ENCODE measurements at regions of chr13 and their contacts with region 1.

Region 1: DNA sequence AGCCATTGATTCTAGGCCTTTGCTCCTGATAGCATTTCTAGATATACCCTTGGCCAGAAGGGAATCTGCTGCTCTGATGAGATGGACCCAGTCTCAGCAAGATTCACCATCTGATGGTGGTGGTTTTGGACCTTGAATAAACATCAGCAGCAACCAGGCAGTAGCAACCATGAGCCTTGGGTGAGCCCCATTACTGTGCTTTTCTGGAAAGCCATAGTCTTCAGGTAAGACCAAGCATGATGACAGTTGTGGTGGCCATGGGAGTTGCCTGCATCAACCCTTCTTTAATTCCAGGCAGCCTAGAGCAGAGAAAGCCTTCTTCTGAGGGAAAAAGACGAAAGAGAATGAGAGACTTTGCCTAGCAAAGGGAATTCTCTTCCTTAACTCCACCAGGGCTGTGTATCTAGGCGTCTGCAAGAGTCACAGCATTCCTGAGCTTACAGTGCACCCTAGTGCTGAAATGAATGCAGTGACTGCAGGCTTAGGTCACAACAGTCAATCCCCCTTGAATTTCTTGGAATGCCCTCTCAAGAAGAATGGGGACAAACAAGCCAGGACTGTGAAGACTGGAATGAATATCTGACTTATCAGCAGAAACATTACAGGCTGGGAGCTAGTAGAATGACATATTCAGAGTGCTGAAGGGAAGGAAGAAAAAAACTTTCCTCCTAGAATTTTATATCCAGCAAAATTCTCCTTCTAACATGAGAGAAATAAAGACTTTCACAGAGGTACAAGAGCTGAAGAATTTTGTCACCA is 942.4 kb upstream of the PCDH20 start:
- DNase-seq: peak; percentile 74
- H3K4me3 Mint-ChIP-seq: no peak overlapping the region
- H3K27ac Mint-ChIP-seq: no peak overlapping the region
- H3K4me1 Mint-ChIP-seq: no peaks in the 10 kb centered on the region
- H3K27me3 Mint-ChIP-seq: peaks cover 39% of the 10 kb centered on the region
- CTCF ChIP-seq: peak; percentile 78

Region 2: DNA sequence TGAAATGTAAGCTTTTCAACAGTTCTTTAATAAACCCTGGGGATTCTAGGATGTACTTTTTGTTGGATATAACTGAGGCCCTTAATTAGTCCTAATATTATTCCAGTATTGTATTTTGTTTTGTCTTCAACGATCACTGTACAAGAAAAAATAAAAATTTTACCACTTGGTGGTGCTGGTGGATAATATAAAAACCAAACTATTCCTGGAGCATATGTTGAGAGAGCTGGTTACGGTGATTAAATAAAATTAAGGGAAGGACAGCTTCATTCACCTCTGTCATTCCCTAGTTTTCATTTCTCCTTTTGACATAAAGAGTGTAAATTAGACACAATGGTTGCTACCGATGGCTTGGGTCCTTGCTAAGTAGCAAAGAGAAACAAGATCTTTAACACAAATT is 343.8 kb before region 1 on chr13:
- CTCF ChIA-PET with region 1: interaction called, 5 read pairs
- POLR2A ChIA-PET with region 1: no interaction called
- intact Hi-C with region 1: loop called (anchors 1 kb)
- DNase-seq: peak; percentile 38
- H3K4me3 Mint-ChIP-seq: no peak overlapping the region
- H3K27ac Mint-ChIP-seq: no peak overlapping the region
- H3K4me1 Mint-ChIP-seq: no peaks in the 10 kb centered on the region
- H3K27me3 Mint-ChIP-seq: no peaks in the 10 kb centered on the region
- CTCF ChIP-seq: peak; percentile 42

Region 3: DNA sequence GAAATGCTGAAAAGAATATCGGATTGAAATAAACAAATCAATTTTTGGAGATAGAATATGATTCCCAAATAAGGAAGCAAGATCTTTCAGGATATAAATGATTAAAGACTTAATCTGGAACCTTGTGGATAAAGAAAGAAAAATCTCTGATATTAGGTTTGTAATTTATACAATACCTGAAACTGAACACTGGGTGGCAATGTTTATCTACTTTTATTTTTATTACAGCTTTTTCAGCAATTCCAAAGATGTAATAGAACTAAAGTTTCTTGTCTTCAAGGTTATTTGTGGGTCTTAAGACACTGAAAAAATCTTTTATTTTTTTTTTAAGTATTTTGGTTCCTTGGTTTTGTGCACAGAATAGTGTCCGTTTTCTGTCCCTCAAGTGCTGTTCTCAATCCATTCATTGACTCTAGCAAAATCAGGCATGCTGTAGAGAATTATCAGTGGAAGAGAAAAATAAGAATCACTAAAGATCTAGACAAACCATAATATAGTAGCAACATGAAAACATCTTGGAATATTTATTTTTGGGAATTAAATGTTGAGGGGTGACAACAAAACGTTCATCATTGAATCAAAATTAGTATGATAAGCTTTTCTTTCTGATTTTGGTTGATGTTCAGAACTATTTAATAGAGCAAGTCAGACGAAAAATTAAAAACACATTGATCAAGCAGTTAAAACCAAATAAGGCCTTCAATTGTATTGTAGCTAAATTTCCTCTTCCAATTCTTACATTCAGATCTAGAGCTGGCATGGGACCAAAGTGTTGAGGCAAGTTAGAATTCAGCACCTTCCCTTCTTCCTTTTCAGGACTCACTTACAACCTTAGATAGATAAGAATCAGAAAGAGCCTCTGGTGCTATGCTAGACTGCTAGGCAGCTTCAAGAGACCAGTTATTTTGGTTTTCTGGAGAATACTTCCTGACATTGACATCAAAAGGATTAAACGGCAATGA is 238.0 kb before region 1 on chr13:
- CTCF ChIA-PET with region 1: interaction called, 21 read pairs
- POLR2A ChIA-PET with region 1: interaction called, 5 read pairs
- intact Hi-C with region 1: loop called (anchors 1 kb)
- DNase-seq: peak; percentile 27
- H3K4me3 Mint-ChIP-seq: no peak overlapping the region
- H3K27ac Mint-ChIP-seq: no peak overlapping the region
- H3K4me1 Mint-ChIP-seq: no peaks in the 10 kb centered on the region
- H3K27me3 Mint-ChIP-seq: peaks cover 32% of the 10 kb centered on the region
- CTCF ChIP-seq: peak; percentile 37

Region 4: DNA sequence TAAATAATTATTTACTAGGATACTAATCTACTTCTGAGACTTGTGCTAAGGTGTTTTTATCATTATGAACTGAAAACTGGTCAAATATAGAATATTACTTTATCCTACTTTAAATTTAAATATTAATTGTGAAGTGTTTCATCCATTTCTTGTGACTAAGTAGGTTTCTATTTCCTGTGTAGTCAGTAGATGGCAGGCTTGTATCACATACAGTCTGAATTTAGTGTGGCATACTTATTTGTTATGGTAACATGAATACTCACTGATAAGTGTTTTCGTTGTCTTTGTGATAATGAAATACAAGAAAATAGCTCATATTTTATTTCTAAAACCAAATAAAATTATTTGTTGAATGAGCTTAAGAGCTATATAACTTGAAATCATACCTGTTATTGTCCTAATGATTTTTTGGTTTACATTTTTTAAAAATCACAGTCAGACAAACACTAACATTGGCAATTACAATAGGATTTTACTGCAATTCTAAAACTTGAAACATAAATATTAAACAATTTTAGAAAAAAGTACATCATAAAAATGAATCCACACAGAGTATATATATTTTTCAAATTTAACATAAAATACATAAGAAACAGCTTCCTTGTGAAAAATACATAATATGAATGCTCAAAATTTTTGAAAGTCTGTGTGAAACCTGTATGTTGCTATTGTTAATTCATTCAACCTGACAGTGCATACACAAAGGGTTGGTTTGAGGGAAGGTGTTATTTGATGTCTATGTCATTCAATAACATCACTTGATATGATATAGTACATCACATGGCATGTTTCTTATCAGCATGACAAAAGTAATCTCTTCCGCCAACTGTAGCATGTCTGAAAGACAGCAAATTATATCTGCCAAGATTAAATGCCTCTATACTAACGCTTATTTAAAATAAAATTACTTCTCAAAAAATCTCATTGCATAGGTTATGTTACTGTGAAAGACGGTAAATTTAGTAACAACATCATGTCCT is 37.6 kb before region 1 on chr13:
- CTCF ChIA-PET with region 1: interaction called, 3 read pairs
- POLR2A ChIA-PET with region 1: no interaction called
- intact Hi-C with region 1: loop called (anchors 1 kb)
- DNase-seq: peak; percentile 61
- H3K4me3 Mint-ChIP-seq: no peak overlapping the region
- H3K27ac Mint-ChIP-seq: no peak overlapping the region
- H3K4me1 Mint-ChIP-seq: no peaks in the 10 kb centered on the region
- H3K27me3 Mint-ChIP-seq: peaks cover 21% of the 10 kb centered on the region
- CTCF ChIP-seq: peak; percentile 45